Activated naive CD4-positive, alpha-beta T cell treated with anti-CD3 and anti-CD28 coated beads for 36 hours (primary cell): ENCODE measurements at regions of chr2 and their contacts with region 1.

Region 1: GRCh38 chr2:196926562-196927375 is at the start of gene PGAP1:
- DNase-seq: peak; percentile 85
- H3K4me3 Mint-ChIP-seq: peak within 1 kb of the TSS; percentile 93
- H3K27ac Mint-ChIP-seq: peak within 1 kb of the TSS; percentile 98
- H3K4me1 Mint-ChIP-seq: peaks cover 31% of the 10 kb centered on the region
- H3K27me3 Mint-ChIP-seq: no peaks in the 10 kb centered on the region
- total RNA-seq, gene PGAP1: 29.3 to 33.3 TPM

Region 2: DNA sequence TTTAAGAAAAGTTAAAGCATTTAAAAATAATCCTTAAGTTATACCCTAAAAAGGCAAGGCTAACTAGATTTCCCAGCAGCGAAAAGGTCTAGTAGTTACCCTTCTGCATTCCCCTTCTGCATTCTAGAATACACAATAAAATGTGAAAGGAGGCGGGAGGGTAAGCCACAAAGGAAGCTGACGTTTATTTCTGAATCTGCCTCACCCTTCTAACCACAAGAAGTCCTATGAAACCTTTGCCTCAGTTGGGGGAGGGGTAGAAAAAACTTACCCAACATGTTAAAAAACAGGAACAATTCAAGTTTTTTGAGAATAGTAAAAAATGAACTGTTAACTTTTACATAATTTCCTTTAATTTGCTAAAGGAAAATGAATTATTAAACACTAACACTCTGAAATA is 766.7 kb before region 1 on chr2:
- CTCF ChIA-PET with region 1: no interaction called
- intact Hi-C with region 1: loop called (anchors 5 kb)
- DNase-seq: peak; percentile 77
- H3K4me3 Mint-ChIP-seq: peak overlapping the region; percentile 36
- H3K27ac Mint-ChIP-seq: peak overlapping the region; percentile 96
- H3K4me1 Mint-ChIP-seq: peaks cover 67% of the 10 kb centered on the region
- H3K27me3 Mint-ChIP-seq: no peaks in the 10 kb centered on the region

Region 3: GRCh38 chr2:196639180-196640030 is 287.4 kb before region 1 on chr2 and contains the start of gene CCDC150:
- CTCF ChIA-PET with region 1: no interaction called
- intact Hi-C with region 1: loop called (anchors 2 kb)
- DNase-seq: peak; percentile 97
- H3K4me3 Mint-ChIP-seq: peak within 1 kb of the TSS; percentile 92
- H3K27ac Mint-ChIP-seq: peak within 1 kb of the TSS; percentile 48
- H3K4me1 Mint-ChIP-seq: peaks cover 11% of the 10 kb centered on the region
- H3K27me3 Mint-ChIP-seq: peaks cover 1% of the 10 kb centered on the region
- total RNA-seq, gene CCDC150: 10.1 to 10.8 TPM

Region 4: GRCh38 chr2:196725882-196726281 is 200.9 kb before region 1 on chr2:
- CTCF ChIA-PET with region 1: no interaction called
- intact Hi-C with region 1: no loop called
- DNase-seq: no peak
- H3K4me3 Mint-ChIP-seq: no peak overlapping the region
- H3K27ac Mint-ChIP-seq: no peak overlapping the region
- H3K4me1 Mint-ChIP-seq: no peaks in the 10 kb centered on the region
- H3K27me3 Mint-ChIP-seq: no peaks in the 10 kb centered on the region

Region 5: GRCh38 chr2:196915507-196916189 is 11.1 kb before region 1 on chr2:
- CTCF ChIA-PET with region 1: no interaction called
- intact Hi-C with region 1: loop called (anchors 1 kb)
- DNase-seq: no peak
- H3K4me3 Mint-ChIP-seq: peak overlapping the region; percentile 44
- H3K27ac Mint-ChIP-seq: peak overlapping the region; percentile 93
- H3K4me1 Mint-ChIP-seq: peaks cover 45% of the 10 kb centered on the region
- H3K27me3 Mint-ChIP-seq: no peaks in the 10 kb centered on the region

Region 6: DNA sequence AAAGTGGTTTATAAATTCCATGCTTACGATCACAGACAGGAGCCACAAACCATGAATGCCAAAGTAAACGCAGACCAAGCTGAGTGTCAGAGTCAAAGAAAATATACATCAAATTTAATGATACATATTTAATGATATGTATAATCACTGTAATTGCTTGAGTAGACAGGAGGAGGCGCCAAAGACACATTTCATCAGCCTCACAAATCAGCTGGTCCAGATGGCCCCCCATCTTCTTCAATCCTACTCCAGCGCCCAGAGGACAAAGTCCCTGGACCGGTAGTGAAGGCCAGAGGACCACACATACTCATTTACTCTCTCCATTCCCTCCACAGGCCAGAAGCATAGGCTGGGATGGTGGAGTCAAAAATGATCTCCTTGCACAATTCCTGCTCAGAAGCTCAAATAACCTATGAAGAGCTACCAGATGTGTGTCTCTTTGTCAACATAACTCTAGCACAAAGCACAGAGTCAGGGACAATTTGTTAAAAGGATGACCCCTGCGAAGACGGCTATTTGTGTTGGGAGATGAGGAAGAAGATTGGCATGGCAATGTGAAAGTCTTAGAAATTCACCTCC is 149.1 kb after region 1 on chr2:
- CTCF ChIA-PET with region 1: interaction called, 3 read pairs
- intact Hi-C with region 1: loop called (anchors 2 kb)
- DNase-seq: peak; percentile 35
- H3K4me3 Mint-ChIP-seq: no peak overlapping the region
- H3K27ac Mint-ChIP-seq: no peak overlapping the region
- H3K4me1 Mint-ChIP-seq: peaks cover 44% of the 10 kb centered on the region
- H3K27me3 Mint-ChIP-seq: no peaks in the 10 kb centered on the region

Region 7: GRCh38 chr2:197255543-197255942 is 328.8 kb after region 1 on chr2:
- CTCF ChIA-PET with region 1: no interaction called
- intact Hi-C with region 1: loop called (anchors 2 kb)
- DNase-seq: peak; percentile 87
- H3K4me3 Mint-ChIP-seq: peak overlapping the region; percentile 75
- H3K27ac Mint-ChIP-seq: peak overlapping the region; percentile 97
- H3K4me1 Mint-ChIP-seq: peaks cover 75% of the 10 kb centered on the region
- H3K27me3 Mint-ChIP-seq: no peaks in the 10 kb centered on the region

Region 8: GRCh38 chr2:197453161-197453914 is 526.6 kb after region 1 on chr2 and contains the start of gene COQ10B:
- CTCF ChIA-PET with region 1: no interaction called
- intact Hi-C with region 1: loop called (anchors 1 kb)
- DNase-seq: peak; percentile 99
- H3K4me3 Mint-ChIP-seq: peak within 1 kb of the TSS; percentile 100
- H3K27ac Mint-ChIP-seq: peak within 1 kb of the TSS; percentile 100
- H3K4me1 Mint-ChIP-seq: peaks cover 45% of the 10 kb centered on the region
- H3K27me3 Mint-ChIP-seq: no peaks in the 10 kb centered on the region
- total RNA-seq, gene COQ10B: 17.5 to 17.8 TPM